ENCODE measurements at regions of chr15 and their contacts with region 1.

Region 1: GRCh38 chr15:78000091-78000926 is 77.2 kb downstream of the TBC1D2B start:
- DNase-seq: peak in 4 of 5 donors; percentile 56 to 71 (median 60)
- H3K4me3 ChIP-seq: no peak overlapping the region
- H3K27ac ChIP-seq: no peak overlapping the region
- H3K4me1 ChIP-seq: peaks cover 13% of the 10 kb centered on the region
- H3K27me3 ChIP-seq: no peaks in the 10 kb centered on the region
- CTCF ChIP-seq: peak in 1 of 3 donors; percentile 14
- EP300 ChIP-seq: no peak
- POLR2A ChIP-seq: no peak

Region 2: GRCh38 chr15:77944002-77944867 is 56.1 kb before region 1 on chr15:
- intact Hi-C with region 1: loop called in 1 of 4 experiments (anchors 2 kb)
- DNase-seq: peak; percentile 80 to 88 (median 83)
- H3K4me3 ChIP-seq: peak overlapping the region; percentile 45
- H3K27ac ChIP-seq: peak overlapping the region; percentile 60 to 75
- H3K4me1 ChIP-seq: no peaks in the 10 kb centered on the region
- H3K27me3 ChIP-seq: no peaks in the 10 kb centered on the region
- CTCF ChIP-seq: no peak
- EP300 ChIP-seq: no peak
- POLR2A ChIP-seq: no peak

Region 3: GRCh38 chr15:78077058-78077877 is 77.0 kb after region 1 on chr15 and contains the start of gene TBC1D2B:
- intact Hi-C with region 1: loop called in 3 of 4 experiments (anchors 5 to 10 kb)
- DNase-seq: peak; percentile 72 to 83 (median 81)
- H3K4me3 ChIP-seq: peak within 1 kb of the TSS; percentile 82
- H3K27ac ChIP-seq: peak within 1 kb of the TSS; percentile 93 to 95
- H3K4me1 ChIP-seq: peaks cover 9% of the 10 kb centered on the region
- H3K27me3 ChIP-seq: no peaks in the 10 kb centered on the region
- CTCF ChIP-seq: no peak
- EP300 ChIP-seq: no peak
- POLR2A ChIP-seq: no peak
- total RNA-seq, gene TBC1D2B: 42.3 to 146 (median 115) TPM